ENCODE measurements at regions of chr12 and their contacts with region 1.

Region 1: GRCh38 chr12:133080368-133081158 is at the start of gene ZNF140:
- DNase-seq: peak; percentile 98
- H3K4me3 Mint-ChIP-seq: no peak within 1 kb of the TSS
- H3K27ac Mint-ChIP-seq: no peak within 1 kb of the TSS
- H3K4me1 Mint-ChIP-seq: peaks cover 4% of the 10 kb centered on the region
- H3K27me3 Mint-ChIP-seq: no peaks in the 10 kb centered on the region
- total RNA-seq, gene ZNF140: 12.7 and 14.5 TPM in 2 replicates

Region 2: DNA sequence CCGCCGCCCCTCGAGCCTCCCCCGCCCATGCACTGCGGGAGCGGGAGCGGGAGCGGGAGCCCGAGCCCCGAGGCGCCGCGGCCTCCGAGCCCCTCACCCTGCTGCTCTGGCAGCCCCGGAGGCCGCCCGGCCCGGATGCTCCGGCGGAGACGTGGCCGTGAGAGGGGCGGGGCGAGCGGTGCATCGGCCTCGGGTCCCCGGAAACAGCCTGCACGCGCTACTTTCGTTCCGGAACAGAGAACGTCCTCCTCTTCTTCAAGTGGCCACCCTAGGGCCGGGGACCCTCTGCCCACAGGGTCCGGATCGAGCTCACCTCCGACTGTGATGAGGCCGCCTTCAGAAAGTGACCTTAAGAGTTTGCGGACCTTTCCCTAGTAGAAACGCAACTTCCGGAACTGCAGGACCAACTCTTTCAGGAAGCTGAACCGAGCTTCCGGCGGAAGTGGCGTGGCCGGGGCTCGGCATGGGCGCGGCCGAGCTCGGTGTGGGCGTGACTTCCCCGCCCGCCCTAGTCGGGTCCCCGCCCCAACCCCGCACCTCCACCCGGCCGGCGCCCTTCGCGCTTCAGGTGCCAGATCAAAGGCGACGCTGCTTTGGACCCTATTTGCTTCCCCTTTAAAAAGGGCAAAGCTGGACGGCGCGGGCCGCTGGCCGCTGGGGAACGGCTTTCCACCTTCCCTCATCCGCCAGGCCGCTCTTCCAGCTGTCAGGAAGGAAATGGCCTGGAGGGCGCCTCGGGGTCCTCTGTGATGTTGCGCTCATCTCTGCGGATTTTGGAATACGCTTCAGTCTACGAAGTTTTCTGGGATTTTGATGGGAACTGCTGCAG is 251.6 kb before region 1 on chr12 and contains the start of gene GOLGA3:
- intact Hi-C with region 1: loop called (anchors 1 kb)
- DNase-seq: peak; percentile 98
- H3K4me3 Mint-ChIP-seq: peak within 1 kb of the TSS; percentile 98
- H3K27ac Mint-ChIP-seq: peak within 1 kb of the TSS; percentile 100
- H3K4me1 Mint-ChIP-seq: peaks cover 30% of the 10 kb centered on the region
- H3K27me3 Mint-ChIP-seq: no peaks in the 10 kb centered on the region
- total RNA-seq, gene GOLGA3: 67.6 and 68.1 TPM in 2 replicates

Region 3: DNA sequence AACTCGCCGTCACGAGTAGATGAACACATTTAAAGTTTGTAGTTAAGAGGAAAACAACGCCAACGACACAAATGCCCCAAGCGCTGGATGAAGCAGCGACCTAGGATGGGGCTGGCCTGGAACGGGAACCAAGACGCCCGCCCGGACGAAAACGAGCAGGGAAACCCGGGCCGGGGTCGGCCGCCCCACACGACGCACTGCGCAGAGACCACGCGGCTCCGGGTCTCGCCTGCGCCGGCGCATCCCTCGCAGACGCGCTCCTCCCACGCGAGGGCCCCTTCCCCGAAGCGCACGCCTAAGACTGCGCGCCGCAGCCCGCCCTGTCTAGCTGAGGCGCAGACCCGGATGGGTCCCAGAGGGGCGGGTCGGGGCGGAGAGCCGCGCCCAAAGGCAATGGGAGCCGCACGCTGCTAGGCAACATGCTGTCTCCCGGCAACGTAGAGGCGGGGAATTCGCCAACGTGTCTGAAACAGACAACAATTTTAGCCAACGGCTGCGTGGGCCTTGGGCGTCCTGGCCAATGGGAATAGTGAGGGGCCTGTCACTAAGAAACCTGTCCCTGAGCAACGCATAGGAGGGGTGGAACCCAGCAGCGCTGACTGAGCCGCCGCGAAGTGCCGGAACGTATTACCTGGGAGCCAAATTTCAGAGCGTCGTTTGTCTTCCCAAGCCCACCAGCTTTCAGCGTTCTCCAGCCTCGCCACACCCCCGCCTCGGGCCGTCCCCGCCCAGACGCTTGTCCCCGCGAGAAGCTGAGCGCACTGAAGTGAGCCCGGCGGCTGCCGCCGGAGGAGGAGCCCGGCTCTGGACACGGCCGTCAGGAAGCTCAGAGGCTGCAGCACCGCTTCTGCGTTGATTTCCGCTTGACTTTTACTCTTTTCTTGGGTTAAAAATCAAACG is 172.2 kb before region 1 on chr12:
- intact Hi-C with region 1: loop called (anchors 1 kb)
- DNase-seq: peak; percentile 97
- H3K4me3 Mint-ChIP-seq: peak overlapping the region; percentile 89
- H3K27ac Mint-ChIP-seq: peak overlapping the region; percentile 89
- H3K4me1 Mint-ChIP-seq: peaks cover 3% of the 10 kb centered on the region
- H3K27me3 Mint-ChIP-seq: peaks cover 10% of the 10 kb centered on the region

Region 4: GRCh38 chr12:132986001-132986912 is 94.3 kb before region 1 on chr12 and contains the start of gene ZNF26:
- intact Hi-C with region 1: loop called (anchors 1 kb)
- DNase-seq: peak; percentile 96
- H3K4me3 Mint-ChIP-seq: peak within 1 kb of the TSS; percentile 86
- H3K27ac Mint-ChIP-seq: peak within 1 kb of the TSS; percentile 95
- H3K4me1 Mint-ChIP-seq: peaks cover 21% of the 10 kb centered on the region
- H3K27me3 Mint-ChIP-seq: no peaks in the 10 kb centered on the region
- total RNA-seq, gene ZNF26: 18.3 and 20.1 TPM in 2 replicates

Region 5: GRCh38 chr12:133046698-133047097 is 33.9 kb before region 1 on chr12:
- intact Hi-C with region 1: no loop called
- DNase-seq: no peak
- H3K4me3 Mint-ChIP-seq: no peak overlapping the region
- H3K27ac Mint-ChIP-seq: no peak overlapping the region
- H3K4me1 Mint-ChIP-seq: no peaks in the 10 kb centered on the region
- H3K27me3 Mint-ChIP-seq: no peaks in the 10 kb centered on the region

Region 6: GRCh38 chr12:133130038-133130807 is 49.7 kb after region 1 on chr12 and contains the starts of genes ZNF10 and ZNF891:
- intact Hi-C with region 1: loop called (anchors 1 kb)
- DNase-seq: peak; percentile 99
- H3K4me3 Mint-ChIP-seq: peak within 1 kb of the TSS; percentile 98
- H3K27ac Mint-ChIP-seq: peak within 1 kb of the TSS; percentile 99
- H3K4me1 Mint-ChIP-seq: peaks cover 11% of the 10 kb centered on the region
- H3K27me3 Mint-ChIP-seq: no peaks in the 10 kb centered on the region
- total RNA-seq, gene ZNF10: 3.3 and 4.2 TPM in 2 replicates
- total RNA-seq, gene ZNF891: 2.2 and 2.4 TPM in 2 replicates